Activated CD4-positive, alpha-beta T cell treated with anti-CD3 and anti-CD28 coated beads for 36 hours (primary cell): ENCODE measurements at regions of chr1 and their contacts with region 1.

Region 1: GRCh38 chr1:198620951-198621824 is 17.7 kb upstream of the PTPRC start:
- DNase-seq: peak; percentile 84
- ATAC-seq: peak; percentile 77
- H3K4me3 Mint-ChIP-seq: peak overlapping the region; percentile 76
- H3K27ac Mint-ChIP-seq: peak overlapping the region; percentile 100
- H3K4me1 Mint-ChIP-seq: peaks cover 94% of the 10 kb centered on the region
- H3K27me3 Mint-ChIP-seq: no peaks in the 10 kb centered on the region

Region 2: DNA sequence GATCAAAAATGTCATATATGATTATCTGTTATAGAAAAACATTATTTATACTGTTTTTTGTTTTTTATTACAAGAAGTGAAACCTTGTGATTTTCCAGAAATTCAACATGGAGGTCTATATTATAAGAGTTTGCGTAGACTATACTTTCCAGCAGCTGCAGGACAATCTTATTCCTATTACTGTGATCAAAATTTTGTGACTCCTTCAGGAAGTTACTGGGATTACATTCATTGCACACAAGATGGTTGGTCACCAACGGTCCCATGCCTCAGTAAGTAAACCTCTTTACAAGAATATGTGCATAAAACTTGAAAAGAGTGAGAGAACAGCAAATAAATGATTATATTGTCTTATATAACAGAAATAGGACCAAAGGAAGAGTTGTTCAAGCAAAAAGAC is 1718.8 kb before region 1 on chr1:
- CTCF ChIA-PET with region 1: no interaction called
- POLR2A ChIA-PET with region 1: no interaction called
- intact Hi-C with region 1: no loop called
- DNase-seq: no peak
- ATAC-seq: no peak
- H3K4me3 Mint-ChIP-seq: no peak overlapping the region
- H3K27ac Mint-ChIP-seq: no peak overlapping the region
- H3K4me1 Mint-ChIP-seq: no peaks in the 10 kb centered on the region
- H3K27me3 Mint-ChIP-seq: no peaks in the 10 kb centered on the region

Region 3: GRCh38 chr1:197915862-197916499 is 705.2 kb before region 1 on chr1:
- CTCF ChIA-PET with region 1: no interaction called
- POLR2A ChIA-PET with region 1: interaction called, 10 read pairs
- intact Hi-C with region 1: no loop called
- DNase-seq: peak; percentile 29
- ATAC-seq: no peak
- H3K4me3 Mint-ChIP-seq: peak overlapping the region; percentile 67
- H3K27ac Mint-ChIP-seq: no peak overlapping the region
- H3K4me1 Mint-ChIP-seq: peaks cover 72% of the 10 kb centered on the region
- H3K27me3 Mint-ChIP-seq: peaks cover 96% of the 10 kb centered on the region